Activated CD4-positive, alpha-beta T cell treated with anti-CD3 and anti-CD28 coated beads for 36 hours (primary cell): ENCODE measurements at regions of chr13 and their contacts with region 1.

Region 1: DNA sequence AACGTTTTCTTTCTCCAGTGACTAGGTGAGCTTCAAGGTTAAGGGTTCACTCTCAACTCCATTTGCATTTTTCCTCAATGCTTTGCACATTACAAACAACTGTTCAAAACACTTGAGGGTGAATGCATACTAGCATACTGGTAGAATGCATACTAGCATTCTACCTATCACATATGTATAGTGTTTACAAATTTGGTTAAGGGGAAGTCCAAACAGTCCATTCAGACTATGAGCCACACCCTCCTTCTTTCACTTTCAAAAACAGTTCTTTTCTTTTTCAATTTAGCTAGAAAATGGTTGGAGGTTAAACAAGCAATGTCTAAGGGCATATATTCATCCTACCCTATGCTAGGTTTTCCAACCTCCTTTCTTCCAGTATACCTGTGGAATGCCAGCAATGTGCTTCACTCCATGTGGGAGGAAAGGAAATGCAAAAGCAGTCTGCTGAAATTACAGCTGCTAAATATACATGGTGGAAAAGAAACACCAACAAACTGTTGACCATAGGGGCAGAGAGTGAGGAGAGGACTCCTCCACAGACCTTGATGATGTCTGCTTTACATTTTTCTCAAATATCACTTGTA is 102.6 kb downstream of the DOCK9 start:
- DNase-seq: no peak
- ATAC-seq: peak; percentile 89
- H3K4me3 Mint-ChIP-seq: no peak overlapping the region
- H3K27ac Mint-ChIP-seq: peak overlapping the region; percentile 49
- H3K4me1 Mint-ChIP-seq: peaks cover 23% of the 10 kb centered on the region
- H3K27me3 Mint-ChIP-seq: no peaks in the 10 kb centered on the region

Region 2: GRCh38 chr13:98890186-98890585 is 14.9 kb after region 1 on chr13:
- CTCF ChIA-PET with region 1: interaction called, 10 read pairs
- POLR2A ChIA-PET with region 1: interaction called, 3 read pairs
- intact Hi-C with region 1: loop called in 1 of 2 experiments (anchors 2 kb)
- DNase-seq: peak; percentile 77
- ATAC-seq: peak; percentile 97
- H3K4me3 Mint-ChIP-seq: no peak overlapping the region
- H3K27ac Mint-ChIP-seq: peak overlapping the region; percentile 7
- H3K4me1 Mint-ChIP-seq: peaks cover 17% of the 10 kb centered on the region
- H3K27me3 Mint-ChIP-seq: no peaks in the 10 kb centered on the region